ENCODE measurements at regions of chr1 and their contacts with region 1.

Region 1: DNA sequence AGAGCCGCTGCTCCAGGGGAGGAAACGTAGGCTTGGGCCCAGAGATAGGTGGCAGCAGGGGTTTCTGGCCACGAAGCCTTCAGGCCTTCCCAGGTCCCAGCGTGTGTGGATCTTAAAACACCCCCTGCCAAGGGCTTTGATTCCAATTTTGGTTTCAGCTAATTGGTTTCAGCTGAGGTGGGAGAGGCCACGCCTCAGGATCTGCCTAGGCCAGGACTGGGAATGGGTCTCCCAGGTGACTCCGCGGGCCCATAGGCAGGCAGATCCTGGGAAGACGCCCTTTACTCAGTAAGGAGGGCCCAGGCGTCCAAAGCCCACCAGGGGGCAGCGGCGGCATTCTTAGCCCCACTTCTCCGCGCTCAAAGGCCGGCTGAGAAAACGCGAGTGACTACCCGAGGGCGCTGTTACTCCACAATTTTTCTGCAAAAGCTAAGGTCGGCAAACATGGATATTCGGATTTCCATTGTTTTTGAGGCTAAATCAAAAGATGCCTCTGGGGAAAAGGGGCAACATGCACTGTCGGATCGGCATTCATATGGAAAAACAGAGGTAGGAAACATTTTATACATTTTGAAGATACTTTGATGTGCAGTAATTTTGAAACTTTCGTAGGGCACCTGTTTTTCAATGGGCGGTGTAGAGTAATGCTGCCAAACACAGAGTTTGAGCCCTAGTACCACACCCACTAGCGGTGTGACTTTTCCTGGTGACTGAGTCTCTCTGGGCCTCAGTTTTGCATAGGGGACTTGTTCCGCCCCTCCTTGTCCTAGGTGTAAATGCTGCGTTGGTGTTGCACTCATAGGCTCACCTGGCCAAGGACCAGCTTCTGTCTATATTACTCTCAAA is 31.8 kb upstream of the BCL10 start:
- DNase-seq: peak; percentile 78
- H3K27ac ChIP-seq: no peak overlapping the region
- CTCF ChIP-seq: peak; percentile 95

Region 2: DNA sequence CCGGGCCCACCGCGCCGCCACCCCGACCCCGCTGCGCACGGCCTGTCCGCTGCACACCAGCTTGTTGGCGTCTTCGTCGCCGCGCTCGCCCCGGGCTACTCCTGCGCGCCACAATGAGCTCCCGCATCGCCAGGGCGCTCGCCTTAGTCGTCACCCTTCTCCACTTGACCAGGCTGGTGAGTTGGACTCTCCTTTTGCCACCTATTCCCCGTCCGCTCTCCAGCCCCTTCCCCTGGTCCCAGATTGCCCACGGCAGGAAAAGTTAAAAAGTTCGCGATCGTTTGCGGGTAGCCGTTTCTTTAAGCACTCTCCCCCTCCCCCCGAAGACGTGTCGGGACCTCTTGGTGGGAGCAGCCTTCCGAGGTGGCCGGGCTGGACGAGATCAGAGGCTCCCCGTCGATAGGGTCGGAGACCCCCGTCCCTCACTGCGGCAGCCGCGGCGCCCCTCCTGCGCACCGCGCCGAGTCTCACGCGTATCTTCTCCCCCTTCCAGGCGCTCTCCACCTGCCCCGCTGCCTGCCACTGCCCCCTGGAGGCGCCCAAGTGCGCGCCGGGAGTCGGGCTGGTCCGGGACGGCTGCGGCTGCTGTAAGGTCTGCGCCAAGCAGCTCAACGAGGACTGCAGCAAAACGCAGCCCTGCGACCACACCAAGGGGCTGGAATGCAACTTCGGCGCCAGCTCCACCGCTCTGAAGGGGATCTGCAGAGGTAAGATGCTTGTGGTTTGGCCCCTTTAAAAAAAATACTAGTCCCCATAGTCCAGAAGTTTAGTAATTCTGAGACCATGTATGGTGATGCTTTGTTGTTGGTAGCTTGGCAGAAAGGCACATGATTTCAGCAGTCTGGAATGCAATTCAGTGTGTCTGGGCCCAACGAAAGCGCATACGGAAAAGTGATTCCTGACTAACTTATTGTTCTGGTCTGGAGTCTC is 272.9 kb after region 1 on chr1:
- CTCF ChIA-PET with region 1: interaction called, 13 read pairs
- POLR2A ChIA-PET with region 1: no interaction called
- DNase-seq: peak; percentile 50
- H3K27ac ChIP-seq: peak overlapping the region; percentile 95
- CTCF ChIP-seq: peak; percentile 84

Region 3: GRCh38 chr1:85692730-85693314 is 384.6 kb after region 1 on chr1:
- CTCF ChIA-PET with region 1: interaction called, 18 read pairs
- POLR2A ChIA-PET with region 1: no interaction called
- DNase-seq: peak; percentile 4
- H3K27ac ChIP-seq: no peak overlapping the region
- CTCF ChIP-seq: peak; percentile 54